Panc1 (cell line): ENCODE measurements at regions of chr1 and their contacts with region 1.

Region 1: DNA sequence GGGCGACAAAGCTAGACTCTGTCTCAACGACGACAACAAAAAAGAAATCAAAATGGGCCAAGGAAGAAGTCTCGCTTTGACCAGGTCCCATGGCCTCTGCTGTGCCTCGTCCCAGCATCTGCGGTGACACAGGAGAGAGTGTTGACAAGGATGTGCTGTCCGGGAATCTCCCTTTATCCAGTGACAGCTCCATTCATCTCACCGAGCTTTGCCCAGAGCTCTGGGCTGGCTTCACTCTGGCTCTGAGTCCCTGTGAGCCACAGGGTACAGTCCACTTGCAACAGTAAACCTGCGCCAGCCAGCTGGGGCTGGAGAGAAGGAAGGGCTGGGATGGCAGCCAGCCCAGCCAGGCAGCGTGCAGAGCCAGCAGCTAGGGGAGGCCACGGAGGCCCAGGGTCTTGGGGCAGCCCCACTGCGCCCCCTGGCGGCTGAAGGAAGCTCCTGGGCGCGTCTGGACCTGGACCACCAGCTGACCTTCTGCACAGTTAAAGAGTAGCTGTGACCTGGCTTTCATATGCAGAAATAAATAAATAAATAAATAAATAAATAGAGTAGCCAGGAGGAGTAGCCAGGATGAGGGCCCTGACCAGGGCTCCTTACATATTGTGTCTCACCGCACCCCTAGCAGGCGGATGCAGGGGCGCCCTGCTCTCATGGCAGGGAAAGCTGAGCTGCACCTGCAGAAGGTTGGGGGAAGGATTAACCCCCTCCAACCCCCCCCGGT is 29.7 kb downstream of the ENO1 start:
- DNase-seq: no peak
- ATAC-seq: peak; percentile 95
- H3K4me3 ChIP-seq: no peak overlapping the region
- H3K27ac ChIP-seq: peak overlapping the region; percentile 55; the same call in 1 of the 2 replicates
- H3K4me1 ChIP-seq: peaks cover 30% of the 10 kb centered on the region
- H3K27me3 ChIP-seq: no peaks in the 10 kb centered on the region
- CTCF ChIP-seq: peak; percentile 91

Region 2: DNA sequence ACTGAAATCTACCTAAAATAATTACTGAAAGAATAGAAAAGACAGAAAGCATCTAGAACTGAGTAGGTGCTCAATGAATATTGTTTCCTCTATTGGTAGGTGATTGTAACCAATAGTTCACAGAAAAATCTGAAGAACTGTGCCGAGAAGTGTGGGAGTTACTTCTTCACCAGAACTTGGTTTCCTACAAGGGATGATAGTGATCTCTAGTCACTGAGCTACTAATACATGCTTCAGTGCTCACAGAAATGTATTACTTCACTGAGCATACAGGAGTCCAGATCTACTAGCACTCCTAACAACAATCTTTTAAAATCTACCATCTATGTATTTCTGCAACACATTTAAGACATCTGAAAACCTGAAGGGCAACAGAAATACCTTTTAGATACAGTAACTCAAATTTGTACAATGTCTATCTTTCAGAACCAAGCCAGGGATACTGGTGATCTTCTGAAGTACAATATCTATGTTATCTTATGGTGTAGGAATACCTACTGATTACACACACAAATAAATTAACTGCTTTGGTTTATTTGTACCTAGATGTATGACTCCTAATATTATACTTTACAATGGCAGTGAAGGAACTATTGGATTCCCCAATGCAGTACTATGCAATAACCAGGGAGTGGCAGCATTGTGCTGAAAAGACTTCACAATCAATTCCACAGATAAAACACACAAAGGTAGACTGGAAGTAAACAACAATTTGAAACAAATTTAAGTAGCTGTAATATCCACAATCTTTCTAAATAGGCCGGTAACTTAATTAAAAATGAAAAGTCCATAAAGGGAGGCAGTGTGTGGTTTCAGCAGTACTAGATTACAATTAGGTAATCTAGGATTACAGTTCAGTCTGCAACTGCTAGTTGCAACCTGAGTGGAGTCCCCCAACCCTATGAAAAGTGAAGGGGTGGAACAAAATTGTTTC is 287.9 kb before region 1 on chr1:
- CTCF ChIA-PET with region 1: interaction called, 10 read pairs
- POLR2A ChIA-PET with region 1: no interaction called
- in situ Hi-C with region 1: no loop called
- intact Hi-C with region 1: no loop called
- DNase-seq: no peak
- ATAC-seq: peak; percentile 80
- H3K4me3 ChIP-seq: no peak overlapping the region
- H3K27ac ChIP-seq: no peak overlapping the region
- H3K4me1 ChIP-seq: peaks cover 46% of the 10 kb centered on the region
- H3K27me3 ChIP-seq: no peaks in the 10 kb centered on the region
- CTCF ChIP-seq: peak; percentile 82; the same call in 1 of the 2 replicates

Region 3: GRCh38 chr1:8712413-8713231 is 136.2 kb before region 1 on chr1:
- CTCF ChIA-PET with region 1: interaction called, 5 read pairs
- POLR2A ChIA-PET with region 1: no interaction called
- in situ Hi-C with region 1: no loop called
- intact Hi-C with region 1: loop called (anchors 10 kb)
- DNase-seq: peak; percentile 73
- ATAC-seq: peak; percentile 89
- H3K4me3 ChIP-seq: peak overlapping the region in 1 of 2 experiments; percentile 46; a peak in 3 of 4 replicates
- H3K27ac ChIP-seq: peak overlapping the region; percentile 94
- H3K4me1 ChIP-seq: peaks cover 59% of the 10 kb centered on the region
- H3K27me3 ChIP-seq: no peaks in the 10 kb centered on the region
- CTCF ChIP-seq: no peak

Region 4: GRCh38 chr1:8817406-8818324 is 31.2 kb before region 1 on chr1 and contains the start of gene RERE:
- CTCF ChIA-PET with region 1: interaction called, 17 read pairs
- POLR2A ChIA-PET with region 1: interaction called, 4 read pairs
- in situ Hi-C with region 1: no loop called
- intact Hi-C with region 1: no loop called
- DNase-seq: no peak
- ATAC-seq: peak; percentile 94
- H3K4me3 ChIP-seq: peak within 1 kb of the TSS; percentile 89 to 91
- H3K27ac ChIP-seq: peak within 1 kb of the TSS; percentile 95
- H3K4me1 ChIP-seq: peaks cover 50% of the 10 kb centered on the region
- H3K27me3 ChIP-seq: no peaks in the 10 kb centered on the region
- CTCF ChIP-seq: no peak
- total RNA-seq, gene RERE: 217 TPM

Region 5: DNA sequence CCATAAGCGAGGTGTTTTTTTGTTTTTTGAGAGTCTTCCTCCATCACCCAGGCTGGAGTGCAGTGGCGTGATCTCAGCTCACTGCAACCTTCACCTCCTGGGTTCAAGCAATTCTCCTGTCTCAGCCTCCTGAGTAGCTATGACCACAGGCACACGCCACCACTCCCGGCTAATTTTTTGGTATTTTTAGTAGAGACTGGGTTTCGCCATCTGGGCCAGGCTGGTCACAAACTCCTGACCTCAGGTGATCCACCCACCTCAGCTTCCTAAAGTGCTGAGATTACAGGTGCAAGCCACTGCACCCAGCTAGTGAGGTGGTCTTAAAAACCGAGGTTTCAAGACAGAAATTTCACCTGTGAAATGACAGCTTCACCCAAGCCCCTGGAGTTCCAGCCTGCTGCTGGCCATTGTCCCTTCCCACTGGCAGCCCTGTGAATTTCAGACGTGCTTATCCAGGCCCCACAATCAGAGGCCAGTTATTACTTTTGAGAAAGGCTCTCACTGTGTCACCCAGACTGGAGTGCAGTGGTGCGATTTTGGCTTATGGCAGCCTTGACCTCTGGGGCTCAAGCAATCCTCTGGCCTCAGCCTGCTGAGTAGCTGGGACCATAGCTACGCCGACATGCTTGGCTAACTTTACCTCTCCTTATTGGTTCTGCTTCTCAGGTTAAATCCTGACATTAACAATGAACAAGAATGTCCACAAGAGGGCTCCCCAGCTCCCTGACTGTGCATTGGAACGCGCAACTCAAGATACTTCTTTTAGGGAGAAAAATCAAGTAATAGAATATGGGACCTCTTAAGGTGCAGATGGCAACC is 10.3 kb after region 1 on chr1:
- CTCF ChIA-PET with region 1: interaction called, 11 read pairs
- POLR2A ChIA-PET with region 1: interaction called, 3 read pairs
- in situ Hi-C with region 1: no loop called
- intact Hi-C with region 1: no loop called
- DNase-seq: no peak
- ATAC-seq: peak; percentile 41
- H3K4me3 ChIP-seq: no peak overlapping the region
- H3K27ac ChIP-seq: peak overlapping the region; percentile 78
- H3K4me1 ChIP-seq: peaks cover 65% of the 10 kb centered on the region
- H3K27me3 ChIP-seq: no peaks in the 10 kb centered on the region
- CTCF ChIP-seq: peak; percentile 85

Region 6: GRCh38 chr1:8878448-8879347 is 29.9 kb after region 1 on chr1 and contains the start of gene ENO1:
- CTCF ChIA-PET with region 1: interaction called, 16 read pairs
- POLR2A ChIA-PET with region 1: no interaction called
- in situ Hi-C with region 1: no loop called
- intact Hi-C with region 1: no loop called
- DNase-seq: peak; percentile 94
- ATAC-seq: peak; percentile 83
- H3K4me3 ChIP-seq: peak within 1 kb of the TSS; percentile 94 to 97
- H3K27ac ChIP-seq: peak within 1 kb of the TSS; percentile 100
- H3K4me1 ChIP-seq: peaks cover 38% of the 10 kb centered on the region
- H3K27me3 ChIP-seq: no peaks in the 10 kb centered on the region
- CTCF ChIP-seq: no peak
- total RNA-seq, gene ENO1: 2,480 TPM